Dendritic cell treated with granulocyte-macrophage colony-stimulating factor and Interleukin-4, amounts not matched to agents 40 ng/mL and 50 ng/mL, for 4 days (primary cell): ENCODE measurements at regions of chr2 and their contacts with region 1.

Region 1: DNA sequence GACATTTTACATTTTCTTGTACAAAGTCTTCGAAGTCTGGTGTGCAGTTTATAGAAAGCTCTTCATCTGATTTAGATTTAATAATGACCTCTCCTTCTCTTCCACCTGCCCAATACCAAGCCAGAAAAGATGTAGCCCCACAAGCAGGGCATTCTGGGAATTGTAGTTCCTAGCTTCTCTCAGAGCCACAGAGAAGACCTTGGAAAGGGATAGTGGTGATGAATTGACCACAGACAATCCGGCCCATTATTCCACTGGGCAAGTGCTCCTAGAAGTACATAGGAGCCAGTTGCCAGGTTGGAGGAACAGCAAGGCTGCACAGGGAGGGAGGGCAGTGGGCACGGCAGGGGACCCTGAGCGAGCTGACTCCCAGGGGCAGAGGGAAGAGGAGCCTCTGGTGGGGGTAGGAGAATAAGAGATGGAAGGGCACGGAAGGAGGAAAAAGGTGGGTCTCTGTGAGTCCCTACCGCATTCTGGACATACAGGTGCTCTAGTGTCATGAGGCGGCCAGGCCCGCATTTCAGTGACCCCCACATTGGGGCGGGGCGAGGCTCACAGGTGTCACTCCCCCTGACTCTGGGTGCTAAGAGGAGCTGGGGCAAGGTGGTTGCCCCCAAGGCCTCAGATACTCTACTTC is 152.5 kb upstream of the HAAO start:
- H3K4me3 Mint-ChIP-seq: no peak overlapping the region
- H3K27ac Mint-ChIP-seq: no peak overlapping the region
- H3K4me1 Mint-ChIP-seq: peaks cover 48% of the 10 kb centered on the region
- H3K27me3 Mint-ChIP-seq: peaks cover 2% of the 10 kb centered on the region

Region 2: DNA sequence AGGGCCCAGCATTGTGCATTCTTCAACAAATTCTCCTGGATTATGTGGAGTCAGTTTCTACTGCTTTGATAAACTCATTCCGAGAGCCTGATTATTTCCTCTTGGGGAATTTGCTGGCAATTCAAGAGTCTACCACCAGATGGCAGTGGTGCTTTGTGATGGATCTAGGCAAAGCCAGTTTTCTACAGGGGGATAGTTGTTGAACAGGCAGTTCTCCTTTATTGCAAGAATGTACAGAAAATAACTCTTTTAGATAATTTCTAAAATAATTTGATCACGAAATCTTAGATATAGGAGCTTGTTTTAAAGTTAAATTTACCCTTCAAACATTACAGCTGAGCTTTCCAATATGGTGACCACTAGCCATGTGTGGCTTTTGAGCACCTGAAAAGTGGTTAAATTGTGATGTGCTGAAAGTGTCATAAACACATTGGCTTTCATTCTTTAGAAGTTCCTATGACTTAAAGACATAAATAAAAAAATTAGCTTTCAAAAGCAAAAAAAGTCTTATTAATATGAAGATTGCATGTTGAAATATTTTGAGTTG is 85.8 kb before region 1 on chr2:
- intact Hi-C with region 1: loop called (anchors 5 kb)
- H3K4me3 Mint-ChIP-seq: no peak overlapping the region
- H3K27ac Mint-ChIP-seq: no peak overlapping the region
- H3K4me1 Mint-ChIP-seq: peaks cover 27% of the 10 kb centered on the region
- H3K27me3 Mint-ChIP-seq: peaks cover 3% of the 10 kb centered on the region

Region 3: DNA sequence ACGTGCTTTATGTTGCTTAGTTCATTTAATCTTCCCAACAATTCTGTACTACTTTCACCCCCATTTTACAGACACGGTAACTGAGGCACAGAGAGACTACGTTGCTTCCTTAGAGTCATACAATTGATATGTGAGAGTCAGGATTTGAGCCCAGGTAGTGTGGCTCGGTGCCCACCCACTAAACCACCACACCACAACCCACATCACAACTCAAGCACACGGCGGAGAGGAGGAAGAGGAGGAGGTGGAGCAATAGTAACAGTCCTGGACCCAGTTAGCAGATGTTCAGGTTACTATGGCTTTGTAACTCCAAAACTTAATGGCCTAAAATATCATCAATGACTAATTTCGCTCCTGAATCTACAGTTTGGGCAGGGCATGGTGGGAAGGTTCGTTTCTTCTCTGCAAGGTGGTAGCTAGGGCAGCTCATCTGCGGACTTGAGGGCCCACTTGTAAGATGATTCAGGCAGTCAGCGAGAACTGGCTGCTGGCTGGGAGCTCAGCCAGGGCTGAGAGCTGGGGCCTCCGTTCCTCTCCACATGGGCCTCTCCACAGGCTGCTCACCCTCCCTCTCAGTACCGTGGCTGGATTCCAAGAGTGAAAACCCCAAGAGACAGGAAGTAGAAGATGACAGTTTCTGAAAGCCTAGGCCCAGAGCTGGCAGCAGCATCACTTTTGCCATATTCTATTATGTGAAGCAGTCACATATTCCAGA is 114.4 kb after region 1 on chr2:
- intact Hi-C with region 1: no loop called
- H3K4me3 Mint-ChIP-seq: no peak overlapping the region
- H3K27ac Mint-ChIP-seq: peak overlapping the region; percentile 36
- H3K4me1 Mint-ChIP-seq: peaks cover 38% of the 10 kb centered on the region
- H3K27me3 Mint-ChIP-seq: peaks cover 19% of the 10 kb centered on the region

Region 4: GRCh38 chr2:43537137-43537536 is 592.2 kb after region 1 on chr2:
- intact Hi-C with region 1: loop called (anchors 5 kb)
- H3K4me3 Mint-ChIP-seq: no peak overlapping the region
- H3K27ac Mint-ChIP-seq: no peak overlapping the region
- H3K4me1 Mint-ChIP-seq: peaks cover 21% of the 10 kb centered on the region
- H3K27me3 Mint-ChIP-seq: no peaks in the 10 kb centered on the region